ENCODE measurements at regions of chr5 and their contacts with region 1.

Region 1: GRCh38 chr5:62312036-62312435 is 6.0 kb downstream of the KIF2A start:
- DNase-seq: no peak
- H3K4me3 Mint-ChIP-seq: peak overlapping the region; percentile 11
- H3K27ac Mint-ChIP-seq: peak overlapping the region; percentile 59
- H3K4me1 Mint-ChIP-seq: peaks cover 80% of the 10 kb centered on the region
- H3K27me3 Mint-ChIP-seq: no peaks in the 10 kb centered on the region

Region 2: DNA sequence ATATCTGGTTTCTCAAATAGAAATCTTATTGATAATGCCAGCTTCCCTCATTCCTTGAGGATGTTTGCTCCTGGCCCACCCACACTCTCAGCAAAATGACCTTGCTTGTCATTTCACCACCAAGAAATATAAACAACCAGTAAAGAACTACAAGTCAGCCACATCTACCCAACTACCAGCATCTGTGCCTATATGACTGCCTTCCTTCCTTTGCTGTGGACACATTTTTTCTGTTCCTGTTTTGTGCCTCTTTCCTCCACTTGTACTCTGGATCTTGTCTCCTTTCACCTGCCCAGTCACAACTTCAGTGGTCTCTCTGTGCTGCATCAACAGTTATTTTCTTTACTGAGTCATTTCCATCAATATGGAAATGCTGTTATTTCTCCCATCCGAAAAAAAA is 14.3 kb after region 1 on chr5:
- intact Hi-C with region 1: loop called (anchors 2 kb)
- DNase-seq: no peak
- H3K4me3 Mint-ChIP-seq: no peak overlapping the region
- H3K27ac Mint-ChIP-seq: peak overlapping the region; percentile 75
- H3K4me1 Mint-ChIP-seq: peaks cover 69% of the 10 kb centered on the region
- H3K27me3 Mint-ChIP-seq: no peaks in the 10 kb centered on the region